CD8-positive, alpha-beta T cell (primary cell): ENCODE measurements at regions of chr20 and their contacts with region 1.

Region 1: GRCh38 chr20:62237801-62238571 is at the start of gene OSBPL2:
- DNase-seq: peak; percentile 100
- ATAC-seq: peak; percentile 98
- H3K4me3 ChIP-seq: peak within 1 kb of the TSS; percentile 54 to 58
- H3K4me3 Mint-ChIP-seq: peak within 1 kb of the TSS; percentile 84
- H3K27ac ChIP-seq: peak within 1 kb of the TSS; percentile 65 to 70
- H3K27ac Mint-ChIP-seq: peak within 1 kb of the TSS; percentile 95
- H3K4me1 ChIP-seq: peaks cover 24% of the 10 kb centered on the region
- H3K4me1 Mint-ChIP-seq: peaks cover 41% of the 10 kb centered on the region
- H3K27me3 ChIP-seq: no peaks in the 10 kb centered on the region
- H3K27me3 Mint-ChIP-seq: peaks cover 9% of the 10 kb centered on the region
- CTCF ChIP-seq: no peak
- total RNA-seq, gene OSBPL2: 63.6 to 64.2 TPM

Region 2: GRCh38 chr20:62088237-62089127 is 149.5 kb before region 1 on chr20:
- CTCF ChIA-PET with region 1: no interaction called
- POLR2A ChIA-PET with region 1: no interaction called
- intact Hi-C with region 1: no loop called
- DNase-seq: peak in 4 of 9 experiments; percentile 14 to 65 (median 50)
- ATAC-seq: peak; percentile 74
- H3K4me3 ChIP-seq: no peak overlapping the region
- H3K4me3 Mint-ChIP-seq: no peak overlapping the region
- H3K27ac ChIP-seq: no peak overlapping the region
- H3K27ac Mint-ChIP-seq: no peak overlapping the region
- H3K4me1 ChIP-seq: no peaks in the 10 kb centered on the region
- H3K4me1 Mint-ChIP-seq: no peaks in the 10 kb centered on the region
- H3K27me3 ChIP-seq: peaks cover 0 to 3% of the 10 kb centered on the region in 2 experiments
- H3K27me3 Mint-ChIP-seq: peaks cover 14% of the 10 kb centered on the region
- CTCF ChIP-seq: no peak

Region 3: GRCh38 chr20:62143118-62143973 is 94.6 kb before region 1 on chr20 and contains the starts of genes PSMA7 and SS18L1:
- CTCF ChIA-PET with region 1: no interaction called
- POLR2A ChIA-PET with region 1: no interaction called
- intact Hi-C with region 1: loop called (anchors 1 kb)
- DNase-seq: peak; percentile 65 to 95 (median 85)
- ATAC-seq: peak; percentile 83
- H3K4me3 ChIP-seq: peak within 1 kb of the TSS; percentile 59 to 60
- H3K4me3 Mint-ChIP-seq: peak within 1 kb of the TSS; percentile 92
- H3K27ac ChIP-seq: peak within 1 kb of the TSS; percentile 58 to 83
- H3K27ac Mint-ChIP-seq: peak within 1 kb of the TSS; percentile 93
- H3K4me1 ChIP-seq: peaks cover 37% of the 10 kb centered on the region
- H3K4me1 Mint-ChIP-seq: peaks cover 50% of the 10 kb centered on the region
- H3K27me3 ChIP-seq: no peaks in the 10 kb centered on the region
- H3K27me3 Mint-ChIP-seq: no peaks in the 10 kb centered on the region
- CTCF ChIP-seq: no peak
- total RNA-seq, gene PSMA7: 170 to 179 TPM
- total RNA-seq, gene SS18L1: 12.6 to 12.9 TPM

Region 4: DNA sequence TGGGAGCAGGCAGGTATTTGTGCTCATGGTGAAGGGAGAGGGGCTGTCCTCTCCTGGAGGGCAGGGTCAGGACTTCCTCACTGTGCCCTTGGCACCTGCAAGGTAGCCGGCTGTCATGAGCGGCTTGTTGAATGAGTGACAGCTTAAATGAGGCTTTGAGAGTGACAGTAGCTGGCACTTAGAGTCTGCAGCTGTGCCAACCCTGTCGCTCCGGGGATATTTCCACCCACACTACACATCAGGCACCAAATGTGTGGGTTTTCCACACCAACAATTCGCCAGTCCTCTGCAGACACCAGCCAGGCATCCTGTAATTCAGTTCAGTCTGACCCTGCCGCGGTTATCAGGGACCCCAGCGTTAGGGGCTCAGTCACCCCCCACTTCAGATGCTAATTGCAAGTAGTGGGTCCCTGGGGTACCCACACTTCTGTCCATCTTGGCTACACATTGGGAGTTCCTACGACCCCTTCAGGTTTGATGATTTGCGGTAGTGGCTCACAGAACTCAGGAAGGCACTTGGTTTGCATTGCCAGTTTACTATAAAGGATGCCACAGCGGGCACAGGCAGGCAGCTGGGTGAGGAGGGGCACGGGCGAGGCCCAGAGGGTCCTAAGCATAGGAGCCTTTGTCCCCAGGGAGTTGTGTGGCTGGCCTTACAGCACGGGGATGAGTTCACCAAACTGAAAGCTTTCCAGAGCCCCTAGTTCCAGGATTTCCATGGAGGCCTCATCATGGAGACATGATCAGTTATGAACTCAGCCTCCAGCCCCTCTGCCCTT is 46.0 kb before region 1 on chr20:
- CTCF ChIA-PET with region 1: no interaction called
- POLR2A ChIA-PET with region 1: no interaction called
- intact Hi-C with region 1: no loop called
- DNase-seq: no peak
- ATAC-seq: no peak
- H3K4me3 ChIP-seq: no peak overlapping the region
- H3K4me3 Mint-ChIP-seq: no peak overlapping the region
- H3K27ac ChIP-seq: no peak overlapping the region
- H3K27ac Mint-ChIP-seq: no peak overlapping the region
- H3K4me1 ChIP-seq: no peaks in the 10 kb centered on the region
- H3K4me1 Mint-ChIP-seq: peaks cover 21% of the 10 kb centered on the region
- H3K27me3 ChIP-seq: no peaks in the 10 kb centered on the region
- H3K27me3 Mint-ChIP-seq: no peaks in the 10 kb centered on the region
- CTCF ChIP-seq: no peak

Region 5: DNA sequence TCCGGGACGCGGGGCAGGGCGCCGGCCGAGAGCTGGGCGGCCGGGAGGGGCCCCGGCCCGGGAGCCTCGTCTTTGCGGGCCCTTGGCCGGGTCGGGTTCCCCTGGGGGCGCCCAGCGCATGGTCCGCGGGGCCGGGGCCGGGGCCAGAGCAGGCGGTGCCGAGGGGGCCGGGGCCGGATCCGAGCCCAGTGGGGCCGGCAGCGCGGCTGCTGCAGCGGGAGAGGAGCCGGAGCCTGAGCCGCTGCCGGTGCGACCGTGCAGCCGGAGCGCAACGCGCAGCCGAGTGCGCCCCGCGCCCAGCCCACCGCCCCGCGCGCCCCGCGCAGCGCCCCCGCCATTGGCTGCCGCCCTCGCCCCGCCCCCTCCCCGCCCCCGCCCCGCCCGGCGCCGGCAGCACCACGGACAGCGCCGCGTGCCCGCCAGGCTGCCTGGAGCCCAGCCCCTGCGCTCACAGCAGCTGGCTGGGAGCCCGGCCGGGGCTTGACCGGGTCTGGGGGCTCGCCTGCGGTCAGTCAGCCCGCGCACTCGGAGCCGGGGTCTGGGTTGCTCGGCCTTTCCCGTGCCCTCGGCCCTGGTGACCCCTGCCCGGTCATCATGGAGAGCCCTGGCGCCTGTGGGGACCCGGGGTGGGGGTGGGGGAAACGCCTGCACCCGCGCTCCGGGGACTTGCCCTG is 17.9 kb before region 1 on chr20 and contains the start of gene HRH3:
- CTCF ChIA-PET with region 1: no interaction called
- POLR2A ChIA-PET with region 1: no interaction called
- intact Hi-C with region 1: loop called in 1 of 2 experiments (anchors 1 kb)
- DNase-seq: peak in 8 of 9 experiments; percentile 8 to 61 (median 40)
- ATAC-seq: peak; percentile 91
- H3K4me3 ChIP-seq: no peak within 1 kb of the TSS
- H3K4me3 Mint-ChIP-seq: peak within 1 kb of the TSS; percentile 50
- H3K27ac ChIP-seq: no peak within 1 kb of the TSS
- H3K27ac Mint-ChIP-seq: no peak within 1 kb of the TSS
- H3K4me1 ChIP-seq: peaks cover 8% of the 10 kb centered on the region
- H3K4me1 Mint-ChIP-seq: peaks cover 2% of the 10 kb centered on the region
- H3K27me3 ChIP-seq: peaks cover 6 to 24% of the 10 kb centered on the region in 2 experiments
- H3K27me3 Mint-ChIP-seq: peaks cover 41% of the 10 kb centered on the region
- CTCF ChIP-seq: no peak
- total RNA-seq, gene HRH3: not detected

Region 6: GRCh38 chr20:62427172-62428001 is 189.4 kb after region 1 on chr20 and contains the start of gene RBBP8NL:
- CTCF ChIA-PET with region 1: no interaction called
- POLR2A ChIA-PET with region 1: no interaction called
- intact Hi-C with region 1: no loop called
- DNase-seq: no peak
- ATAC-seq: no peak
- H3K4me3 ChIP-seq: no peak within 1 kb of the TSS
- H3K4me3 Mint-ChIP-seq: no peak within 1 kb of the TSS
- H3K27ac ChIP-seq: no peak within 1 kb of the TSS
- H3K27ac Mint-ChIP-seq: no peak within 1 kb of the TSS
- H3K4me1 ChIP-seq: no peaks in the 10 kb centered on the region
- H3K4me1 Mint-ChIP-seq: no peaks in the 10 kb centered on the region
- H3K27me3 ChIP-seq: no peaks in the 10 kb centered on the region
- H3K27me3 Mint-ChIP-seq: peaks cover 11% of the 10 kb centered on the region
- CTCF ChIP-seq: no peak
- total RNA-seq, gene RBBP8NL: not detected